Natural killer cell (primary cell): ENCODE measurements at regions of chr19 and their contacts with region 1.

Region 1: DNA sequence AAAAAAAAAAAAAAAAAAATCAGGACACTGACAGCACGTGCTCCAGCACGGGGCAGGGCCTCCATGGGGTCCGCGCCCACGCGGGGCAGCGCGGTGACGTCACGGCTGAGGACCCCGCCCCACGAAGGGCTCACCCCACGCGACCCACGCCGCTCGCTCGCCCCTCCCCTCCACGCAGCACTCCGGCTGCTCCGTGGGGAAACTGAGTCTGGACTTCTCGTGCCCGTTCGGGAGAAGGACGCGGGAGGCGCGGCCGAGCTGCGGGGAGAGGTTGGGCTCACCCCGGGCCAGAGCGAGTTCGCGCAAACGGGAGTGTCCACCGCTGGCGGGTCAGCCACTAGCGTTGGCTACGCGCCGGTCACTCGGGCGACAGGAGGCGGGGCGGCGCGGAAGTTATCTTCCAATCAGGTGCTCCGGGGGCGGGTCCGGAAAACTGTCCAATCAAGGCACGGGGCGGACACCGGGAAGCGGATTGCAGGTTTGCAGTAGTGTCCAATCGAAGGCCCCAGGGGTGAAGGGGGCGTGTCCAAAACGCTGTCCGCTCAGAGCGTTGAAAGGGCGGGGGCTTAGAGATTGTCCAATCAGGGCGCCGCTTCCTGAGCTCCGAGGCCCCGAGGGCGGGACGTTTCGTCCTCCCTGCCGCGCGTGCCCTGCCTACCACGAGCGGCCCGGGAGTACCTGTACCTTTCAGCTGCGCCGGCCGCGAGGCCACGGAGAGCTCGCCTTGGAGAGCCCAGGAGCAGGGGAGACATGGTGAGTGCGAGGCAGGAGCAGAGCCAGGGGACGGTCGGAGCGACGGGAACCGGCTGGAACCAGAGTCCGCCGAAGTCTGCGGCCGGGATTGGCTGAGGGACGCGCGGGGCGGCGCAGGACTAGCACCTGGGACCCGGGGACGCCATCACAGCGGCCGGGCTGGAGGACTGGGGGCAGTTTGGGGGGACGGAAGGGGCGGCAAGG is at the start of gene ZNF57:
- DNase-seq: peak; percentile 96 to 99
- ATAC-seq: peak; percentile 98 to 100 (median 98)
- H3K4me3 ChIP-seq: peak within 1 kb of the TSS; percentile 77
- H3K4me3 Mint-ChIP-seq: peak within 1 kb of the TSS; percentile 99
- H3K27ac ChIP-seq: peak within 1 kb of the TSS; percentile 52
- H3K27ac Mint-ChIP-seq: peak within 1 kb of the TSS; percentile 82 to 92
- H3K4me1 ChIP-seq: peaks cover 13% of the 10 kb centered on the region
- H3K4me1 Mint-ChIP-seq: peaks cover 20 to 21% of the 10 kb centered on the region in 2 donors
- H3K27me3 ChIP-seq: no peaks in the 10 kb centered on the region
- H3K27me3 Mint-ChIP-seq: no peaks in the 10 kb centered on the region
- CTCF ChIP-seq: no peak
- total RNA-seq, gene ZNF57: 4.4 to 7.5 (median 4.7) TPM

Region 2: GRCh38 chr19:2827840-2828489 is 72.6 kb before region 1 on chr19:
- intact Hi-C with region 1: no loop called
- DNase-seq: no peak
- ATAC-seq: no peak
- H3K4me3 ChIP-seq: no peak overlapping the region
- H3K4me3 Mint-ChIP-seq: no peak overlapping the region
- H3K27ac ChIP-seq: no peak overlapping the region
- H3K27ac Mint-ChIP-seq: no peak overlapping the region
- H3K4me1 ChIP-seq: no peaks in the 10 kb centered on the region
- H3K4me1 Mint-ChIP-seq: peaks cover 0 to 5% of the 10 kb centered on the region in 2 donors
- H3K27me3 ChIP-seq: no peaks in the 10 kb centered on the region
- H3K27me3 Mint-ChIP-seq: no peaks in the 10 kb centered on the region
- CTCF ChIP-seq: no peak

Region 3: GRCh38 chr19:2944775-2945574 is 44.4 kb after region 1 on chr19 and contains the start of gene ZNF77:
- intact Hi-C with region 1: loop called (anchors 5 kb)
- DNase-seq: peak; percentile 99 to 100
- ATAC-seq: peak; percentile 96 to 99 (median 96)
- H3K4me3 ChIP-seq: peak within 1 kb of the TSS; percentile 99
- H3K4me3 Mint-ChIP-seq: peak within 1 kb of the TSS; percentile 97
- H3K27ac ChIP-seq: peak within 1 kb of the TSS; percentile 97
- H3K27ac Mint-ChIP-seq: peak within 1 kb of the TSS; percentile 95 to 99
- H3K4me1 ChIP-seq: peaks cover 23% of the 10 kb centered on the region
- H3K4me1 Mint-ChIP-seq: peaks cover 25 to 35% of the 10 kb centered on the region in 2 donors
- H3K27me3 ChIP-seq: no peaks in the 10 kb centered on the region
- H3K27me3 Mint-ChIP-seq: no peaks in the 10 kb centered on the region
- CTCF ChIP-seq: no peak
- total RNA-seq, gene ZNF77: 6.0 to 9.2 (median 6.8) TPM